Heart right ventricle (tissue), 16 donors: ENCODE measurements at regions of chr17 and their contacts with region 1.

Region 1: GRCh38 chr17:29407856-29408255 is 17.7 kb downstream of the TAOK1 start:
- DNase-seq: no peak
- ATAC-seq: no peak
- H3K4me3 ChIP-seq: no peak overlapping the region
- H3K27ac ChIP-seq: no peak overlapping the region
- H3K4me1 ChIP-seq: peaks cover 0 to 34% (median 21%) of the 10 kb centered on the region in 9 donors
- H3K27me3 ChIP-seq: no peaks in the 10 kb centered on the region
- CTCF ChIP-seq: no peak

Region 2: DNA sequence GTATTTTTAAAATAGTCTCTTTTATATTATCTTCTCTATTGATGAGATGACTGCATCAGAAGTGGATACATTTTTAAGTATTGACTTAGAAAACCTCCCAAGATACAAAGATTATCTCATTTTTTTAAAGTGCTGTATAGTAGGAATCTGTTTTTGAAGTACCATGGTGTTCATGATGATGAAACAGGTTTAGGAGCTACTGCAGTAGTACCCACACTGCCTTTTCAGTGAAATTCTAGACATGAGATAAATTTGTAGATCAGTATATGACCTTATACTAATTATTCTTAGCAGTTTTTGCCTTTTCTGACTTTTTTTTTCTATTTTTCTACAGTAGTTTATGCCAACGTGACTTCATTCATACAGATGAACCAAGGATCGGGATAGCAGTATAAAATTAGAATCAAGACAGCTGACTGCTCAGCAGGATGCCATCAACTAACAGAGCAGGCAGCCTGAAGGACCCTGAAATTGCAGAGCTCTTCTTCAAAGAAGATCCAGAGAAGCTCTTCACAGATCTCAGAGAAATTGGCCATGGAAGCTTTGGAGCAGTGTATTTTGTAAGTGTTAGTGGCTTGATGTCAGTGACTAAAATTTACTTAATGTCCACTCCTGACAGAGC is 43.4 kb after region 1 on chr17:
- intact Hi-C with region 1: loop called in 1 of 10 experiments (anchors 5 kb)
- DNase-seq: no peak
- ATAC-seq: peak in 1 of 8 donors; percentile 57
- H3K4me3 ChIP-seq: no peak overlapping the region
- H3K27ac ChIP-seq: no peak overlapping the region
- H3K4me1 ChIP-seq: peaks cover 5 to 48% (median 23%) of the 10 kb centered on the region in 9 donors
- H3K27me3 ChIP-seq: no peaks in the 10 kb centered on the region
- CTCF ChIP-seq: no peak